Naive thymus-derived CD4-positive, alpha-beta T cell (primary cell): ENCODE measurements at regions of chr5 and their contacts with region 1.

Region 1: DNA sequence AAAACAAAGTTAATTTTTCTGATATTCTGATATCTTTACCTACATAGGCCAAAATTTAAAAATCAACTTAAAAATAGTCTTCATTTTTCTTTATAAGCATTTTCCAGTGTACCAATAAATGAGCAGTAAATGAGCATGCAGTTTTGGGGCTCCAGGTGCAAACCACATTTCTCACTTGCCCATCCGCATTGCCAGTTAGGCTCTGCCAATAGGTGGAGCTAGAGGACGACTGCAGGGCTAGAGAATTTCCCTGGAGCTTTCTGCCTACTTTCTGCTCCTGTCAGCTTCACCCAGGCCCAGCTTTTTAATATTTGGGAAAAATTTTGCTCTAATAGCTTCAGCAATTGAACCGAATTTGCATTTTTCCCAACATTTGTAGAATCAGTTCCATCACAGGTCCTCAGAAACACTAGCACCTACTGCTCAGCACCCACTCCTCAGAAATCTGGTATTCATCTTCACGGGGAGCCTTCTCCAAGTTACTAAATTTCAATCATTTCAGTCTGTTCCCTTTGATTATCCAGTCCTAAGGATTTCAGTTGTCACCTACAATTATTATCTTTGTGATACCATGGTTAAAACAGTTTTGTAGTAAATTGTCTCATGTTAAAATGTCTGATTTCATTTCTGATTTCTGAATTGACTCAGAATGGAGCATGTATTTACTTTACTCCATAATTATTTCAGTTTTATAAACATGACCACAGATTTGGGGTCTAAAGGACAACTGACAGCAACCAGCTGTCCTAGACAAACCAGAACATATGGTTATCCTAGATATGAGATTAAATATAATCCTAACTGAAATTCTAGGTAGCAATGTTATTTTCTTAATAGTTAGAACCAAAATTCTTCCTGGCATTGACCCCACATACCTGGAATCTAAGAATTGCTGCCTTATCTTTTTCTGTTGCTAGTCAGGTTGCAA is 104.6 kb upstream of the FAM174A start:
- DNase-seq: peak in 6 of 9 donors; percentile 12 to 37 (median 28)
- ATAC-seq: peak; percentile 55
- H3K4me3 ChIP-seq: no peak overlapping the region
- H3K4me3 Mint-ChIP-seq: no peak overlapping the region
- H3K27ac ChIP-seq: no peak overlapping the region
- H3K27ac Mint-ChIP-seq: no peak overlapping the region
- H3K4me1 ChIP-seq: no peaks in the 10 kb centered on the region
- H3K4me1 Mint-ChIP-seq: no peaks in the 10 kb centered on the region
- H3K27me3 ChIP-seq: no peaks in the 10 kb centered on the region
- H3K27me3 Mint-ChIP-seq: peaks cover 0 to 3% (median 0%) of the 10 kb centered on the region in 5 donors

Region 2: DNA sequence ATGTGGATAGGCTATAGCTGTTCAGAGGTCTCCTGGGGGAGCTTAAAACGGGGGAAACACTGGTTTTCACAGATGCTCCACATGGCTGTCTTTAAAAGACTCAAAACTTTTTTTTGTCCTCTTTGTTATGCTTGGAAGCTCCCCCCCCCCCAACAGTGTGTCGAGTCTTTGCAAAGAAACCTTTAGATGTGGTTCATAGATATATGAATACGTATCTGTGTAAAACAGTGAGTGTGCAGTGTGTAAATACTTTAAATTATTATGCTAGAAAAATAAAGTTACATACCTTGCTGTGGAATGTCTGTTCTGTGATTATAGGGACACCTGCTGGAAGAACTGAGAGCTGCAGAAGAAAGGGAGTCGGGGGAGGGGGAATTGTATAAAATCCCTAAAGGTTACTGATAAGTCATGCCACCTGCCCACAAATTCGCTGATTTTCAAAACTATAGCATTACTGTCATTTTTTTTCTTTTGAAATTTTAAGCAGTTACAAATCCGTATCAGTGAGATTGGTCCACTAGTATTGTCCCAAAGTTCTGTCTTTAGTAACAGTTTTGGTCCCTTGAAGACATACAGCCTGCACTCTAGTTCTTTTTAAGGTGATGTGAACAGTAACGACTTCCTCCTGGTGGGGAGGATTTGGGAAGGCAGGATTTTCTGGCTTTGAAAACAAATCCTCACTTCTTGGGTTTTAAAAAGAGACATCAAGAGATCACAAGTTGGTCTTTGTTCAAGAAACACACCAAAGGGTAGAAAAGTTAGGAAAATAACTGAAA is 1634.1 kb before region 1 on chr5:
- CTCF ChIA-PET with region 1: no interaction called
- POLR2A ChIA-PET with region 1: no interaction called
- intact Hi-C with region 1: no loop called
- DNase-seq: peak in 8 of 9 donors; percentile 28 to 62 (median 55)
- ATAC-seq: peak; percentile 73
- H3K4me3 ChIP-seq: no peak overlapping the region
- H3K4me3 Mint-ChIP-seq: no peak overlapping the region
- H3K27ac ChIP-seq: no peak overlapping the region
- H3K27ac Mint-ChIP-seq: peak overlapping the region in 1 of 9 donors; percentile 44
- H3K4me1 ChIP-seq: no peaks in the 10 kb centered on the region
- H3K4me1 Mint-ChIP-seq: peaks cover 0 to 20% (median 4%) of the 10 kb centered on the region in 7 donors
- H3K27me3 ChIP-seq: no peaks in the 10 kb centered on the region
- H3K27me3 Mint-ChIP-seq: peaks cover 0 to 2% (median 0%) of the 10 kb centered on the region in 5 donors

Region 3: GRCh38 chr5:100496296-100496695 is 65.8 kb after region 1 on chr5:
- CTCF ChIA-PET with region 1: no interaction called
- POLR2A ChIA-PET with region 1: no interaction called
- intact Hi-C with region 1: no loop called
- DNase-seq: no peak
- ATAC-seq: no peak
- H3K4me3 ChIP-seq: no peak overlapping the region
- H3K4me3 Mint-ChIP-seq: no peak overlapping the region
- H3K27ac ChIP-seq: no peak overlapping the region
- H3K27ac Mint-ChIP-seq: no peak overlapping the region
- H3K4me1 ChIP-seq: no peaks in the 10 kb centered on the region
- H3K4me1 Mint-ChIP-seq: no peaks in the 10 kb centered on the region
- H3K27me3 ChIP-seq: no peaks in the 10 kb centered on the region
- H3K27me3 Mint-ChIP-seq: no peaks in the 10 kb centered on the region

Region 4: DNA sequence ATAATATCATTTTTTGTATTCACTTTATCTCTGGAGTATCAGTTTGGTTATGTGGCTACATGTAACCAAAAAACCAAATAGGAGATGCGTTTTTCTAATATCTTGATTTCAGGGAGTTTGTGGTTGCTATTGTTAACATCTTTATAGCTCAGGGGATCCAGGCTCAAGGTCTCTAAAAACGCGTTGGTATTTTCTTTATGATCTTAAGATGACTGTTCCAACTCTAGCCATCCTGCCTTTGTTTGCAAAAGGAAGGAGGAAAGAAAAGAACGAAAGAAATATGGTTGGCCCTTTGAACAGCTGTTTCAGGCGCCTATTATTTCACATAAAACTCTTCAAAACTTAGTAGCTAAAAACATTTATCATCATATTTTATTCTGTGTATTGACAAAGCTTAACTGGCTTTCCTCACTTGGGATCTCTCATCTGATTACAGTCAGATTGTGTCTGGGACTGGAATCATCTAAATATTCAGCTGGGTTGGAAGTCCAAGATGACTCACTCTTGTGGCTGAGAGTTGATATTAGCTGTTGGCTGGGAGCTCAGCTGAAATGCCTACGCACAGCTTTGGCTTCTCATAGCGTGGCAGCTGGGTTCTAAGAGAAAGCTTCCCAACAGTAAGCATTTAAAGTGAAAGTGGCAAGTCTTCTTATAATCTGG is 164.8 kb after region 1 on chr5:
- CTCF ChIA-PET with region 1: no interaction called
- POLR2A ChIA-PET with region 1: no interaction called
- intact Hi-C with region 1: no loop called
- DNase-seq: no peak
- ATAC-seq: no peak
- H3K4me3 ChIP-seq: no peak overlapping the region
- H3K4me3 Mint-ChIP-seq: no peak overlapping the region
- H3K27ac ChIP-seq: no peak overlapping the region
- H3K27ac Mint-ChIP-seq: no peak overlapping the region
- H3K4me1 ChIP-seq: no peaks in the 10 kb centered on the region
- H3K4me1 Mint-ChIP-seq: peaks cover 0 to 2% (median 0%) of the 10 kb centered on the region in 7 donors
- H3K27me3 ChIP-seq: no peaks in the 10 kb centered on the region
- H3K27me3 Mint-ChIP-seq: peaks cover 0 to 12% (median 10%) of the 10 kb centered on the region in 5 donors

Region 5: DNA sequence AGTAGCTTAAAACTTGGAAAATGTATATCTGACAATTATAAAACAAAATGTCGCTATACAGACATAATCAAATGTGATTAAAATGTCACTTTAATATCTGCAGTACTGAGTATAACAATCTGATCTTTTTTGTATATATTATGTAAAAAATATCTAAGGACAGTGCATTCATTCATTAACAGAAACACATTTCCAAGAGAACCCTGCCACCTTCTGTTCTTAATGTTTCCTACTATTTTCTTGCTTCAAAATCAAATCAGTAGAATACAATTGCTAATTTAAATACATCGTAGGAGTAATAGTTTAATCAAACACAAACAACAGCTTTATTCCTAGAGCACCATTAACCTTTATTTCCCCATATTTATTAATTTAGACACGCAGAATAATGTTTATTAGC is 615.2 kb after region 1 on chr5:
- CTCF ChIA-PET with region 1: interaction called, 3 read pairs
- POLR2A ChIA-PET with region 1: no interaction called
- intact Hi-C with region 1: loop called (anchors 1 to 2 kb)
- DNase-seq: peak in 5 of 9 donors; percentile 4 to 20 (median 8)
- ATAC-seq: no peak
- H3K4me3 ChIP-seq: no peak overlapping the region
- H3K4me3 Mint-ChIP-seq: no peak overlapping the region
- H3K27ac ChIP-seq: no peak overlapping the region
- H3K27ac Mint-ChIP-seq: no peak overlapping the region
- H3K4me1 ChIP-seq: no peaks in the 10 kb centered on the region
- H3K4me1 Mint-ChIP-seq: peaks cover 0 to 10% (median 9%) of the 10 kb centered on the region in 7 donors
- H3K27me3 ChIP-seq: no peaks in the 10 kb centered on the region
- H3K27me3 Mint-ChIP-seq: peaks cover 0 to 2% (median 0%) of the 10 kb centered on the region in 5 donors

Region 6: GRCh38 chr5:101390151-101390908 is 959.8 kb after region 1 on chr5:
- CTCF ChIA-PET with region 1: interaction called, 3 read pairs
- POLR2A ChIA-PET with region 1: no interaction called
- intact Hi-C with region 1: loop called in 1 of 2 experiments (anchors 2 kb)
- DNase-seq: peak in 4 of 9 donors; percentile 0 to 9 (median 4)
- ATAC-seq: no peak
- H3K4me3 ChIP-seq: no peak overlapping the region
- H3K4me3 Mint-ChIP-seq: no peak overlapping the region
- H3K27ac ChIP-seq: no peak overlapping the region
- H3K27ac Mint-ChIP-seq: no peak overlapping the region
- H3K4me1 ChIP-seq: no peaks in the 10 kb centered on the region
- H3K4me1 Mint-ChIP-seq: no peaks in the 10 kb centered on the region
- H3K27me3 ChIP-seq: no peaks in the 10 kb centered on the region
- H3K27me3 Mint-ChIP-seq: peaks cover 0 to 8% (median 0%) of the 10 kb centered on the region in 5 donors

Region 7: GRCh38 chr5:101678481-101679193 is 1248.1 kb after region 1 on chr5:
- CTCF ChIA-PET with region 1: no interaction called
- POLR2A ChIA-PET with region 1: no interaction called
- intact Hi-C with region 1: loop called in 1 of 2 experiments (anchors 2 kb)
- DNase-seq: peak in 3 of 9 donors; percentile 12 to 35 (median 20)
- ATAC-seq: peak; percentile 56
- H3K4me3 ChIP-seq: no peak overlapping the region
- H3K4me3 Mint-ChIP-seq: no peak overlapping the region
- H3K27ac ChIP-seq: no peak overlapping the region
- H3K27ac Mint-ChIP-seq: no peak overlapping the region
- H3K4me1 ChIP-seq: no peaks in the 10 kb centered on the region
- H3K4me1 Mint-ChIP-seq: no peaks in the 10 kb centered on the region
- H3K27me3 ChIP-seq: no peaks in the 10 kb centered on the region
- H3K27me3 Mint-ChIP-seq: peaks cover 0 to 7% (median 0%) of the 10 kb centered on the region in 5 donors

Region 8: GRCh38 chr5:101977729-101978345 is 1547.3 kb after region 1 on chr5:
- CTCF ChIA-PET with region 1: no interaction called
- POLR2A ChIA-PET with region 1: no interaction called
- intact Hi-C with region 1: loop called (anchors 2 kb)
- DNase-seq: peak in 3 of 9 donors; percentile 6 to 25 (median 9)
- ATAC-seq: no peak
- H3K4me3 ChIP-seq: no peak overlapping the region
- H3K4me3 Mint-ChIP-seq: no peak overlapping the region
- H3K27ac ChIP-seq: no peak overlapping the region
- H3K27ac Mint-ChIP-seq: no peak overlapping the region
- H3K4me1 ChIP-seq: no peaks in the 10 kb centered on the region
- H3K4me1 Mint-ChIP-seq: no peaks in the 10 kb centered on the region
- H3K27me3 ChIP-seq: no peaks in the 10 kb centered on the region
- H3K27me3 Mint-ChIP-seq: peaks cover 0 to 4% (median 0%) of the 10 kb centered on the region in 5 donors